ENCODE measurements at regions of chr3 and their contacts with region 1.

Region 1: DNA sequence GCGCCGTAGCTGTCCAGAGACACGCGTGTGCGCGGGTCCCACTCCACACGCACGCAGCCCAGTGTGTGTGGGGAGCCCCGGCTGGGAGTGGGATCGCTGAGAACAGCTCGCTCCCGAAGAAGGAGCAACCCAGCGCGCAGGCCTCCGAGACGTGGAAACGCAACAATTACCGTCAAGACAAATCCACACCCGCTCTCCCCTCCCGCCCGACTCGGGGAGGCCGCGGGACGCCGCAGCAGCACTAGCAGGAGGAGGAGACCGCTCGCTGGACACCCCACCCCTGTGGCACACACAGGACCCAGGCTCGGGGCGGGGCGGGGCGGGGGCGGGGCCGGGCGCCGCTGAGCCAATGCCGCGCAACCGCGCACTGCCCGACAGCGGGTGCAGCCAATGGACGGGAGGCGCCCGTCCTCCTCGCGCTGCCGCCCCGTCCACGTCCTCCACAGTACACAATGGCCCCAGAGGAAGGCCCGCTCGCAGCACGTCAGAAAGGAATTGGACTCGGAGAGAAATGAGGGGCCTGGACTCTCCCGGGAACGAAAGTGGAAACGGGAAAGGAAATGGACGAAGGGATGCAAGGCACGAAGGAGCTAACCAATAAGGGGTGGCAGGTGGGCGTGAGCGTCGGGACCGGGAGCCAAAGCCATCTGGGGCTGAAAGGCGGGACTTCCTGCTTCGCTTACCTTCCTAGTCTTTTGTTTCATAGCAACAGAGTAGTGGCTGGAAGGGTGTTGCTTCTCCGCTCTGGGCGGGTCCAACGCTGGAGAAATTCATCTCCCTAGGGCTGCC is at the start of gene CBLB:
- DNase-seq: peak; percentile 91
- ATAC-seq: peak; percentile 86
- H3K4me3 Mint-ChIP-seq: peak within 1 kb of the TSS; percentile 100
- H3K27ac Mint-ChIP-seq: peak within 1 kb of the TSS; percentile 100
- H3K4me1 Mint-ChIP-seq: peaks cover 36% of the 10 kb centered on the region
- H3K27me3 Mint-ChIP-seq: no peaks in the 10 kb centered on the region
- total RNA-seq, gene CBLB: 112 to 163 TPM

Region 2: DNA sequence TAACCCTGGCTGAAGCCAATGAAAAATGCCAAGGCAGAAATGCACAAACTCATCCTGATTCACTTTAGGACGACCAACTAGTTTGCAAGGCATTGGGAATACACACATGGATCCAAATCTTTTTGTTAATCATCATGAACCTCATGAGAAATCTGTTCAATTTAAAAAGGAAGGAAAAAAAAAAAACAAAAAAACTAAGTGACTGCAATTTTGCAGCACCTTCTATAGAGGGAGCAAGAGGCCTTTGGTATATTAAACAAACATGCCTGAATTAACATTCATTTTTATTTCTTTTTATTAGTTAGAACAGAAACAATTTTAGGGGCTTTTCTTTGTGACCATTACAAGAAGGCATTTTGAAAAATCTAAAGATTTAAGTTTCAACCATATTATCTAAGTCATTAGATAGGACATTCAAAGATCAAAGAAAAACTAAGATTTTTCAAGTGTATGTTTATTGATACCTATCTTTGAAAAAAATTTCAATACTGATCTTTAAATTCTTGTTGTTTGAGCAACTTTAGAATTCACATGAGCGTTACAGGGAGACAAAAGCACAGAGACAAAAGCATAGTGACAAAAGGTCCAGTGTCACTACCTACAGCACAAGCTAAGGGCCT is 182.5 kb before region 1 on chr3:
- CTCF ChIA-PET with region 1: interaction called, 6 read pairs
- POLR2A ChIA-PET with region 1: no interaction called
- intact Hi-C with region 1: loop called (anchors 2 to 5 kb)
- DNase-seq: no peak
- ATAC-seq: no peak
- H3K4me3 Mint-ChIP-seq: no peak overlapping the region
- H3K27ac Mint-ChIP-seq: peak overlapping the region; percentile 42
- H3K4me1 Mint-ChIP-seq: peaks cover 24% of the 10 kb centered on the region
- H3K27me3 Mint-ChIP-seq: no peaks in the 10 kb centered on the region

Region 3: DNA sequence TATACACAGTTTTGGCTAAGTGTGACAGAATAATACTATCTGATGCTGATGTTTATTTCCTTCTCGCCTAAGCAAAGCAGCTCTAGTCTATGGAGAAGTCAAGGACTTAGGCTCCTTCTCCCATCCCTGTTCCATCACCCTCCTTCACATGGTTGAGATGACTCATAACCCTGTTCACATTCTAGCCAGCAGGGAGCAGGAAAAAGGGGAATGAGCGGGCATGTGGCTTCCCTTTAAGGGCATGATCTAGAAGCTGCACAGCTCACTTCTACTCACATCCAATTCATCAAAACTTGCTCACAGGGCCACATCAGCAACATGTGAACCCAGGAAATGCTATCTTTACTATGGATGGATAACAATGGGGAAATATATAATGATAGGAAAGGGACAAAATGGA is 41.0 kb before region 1 on chr3:
- CTCF ChIA-PET with region 1: interaction called, 3 read pairs
- POLR2A ChIA-PET with region 1: interaction called, 9 read pairs
- intact Hi-C with region 1: loop called (anchors 1 kb)
- DNase-seq: peak; percentile 36
- ATAC-seq: no peak
- H3K4me3 Mint-ChIP-seq: peak overlapping the region; percentile 57
- H3K27ac Mint-ChIP-seq: peak overlapping the region; percentile 100
- H3K4me1 Mint-ChIP-seq: peaks cover 88% of the 10 kb centered on the region
- H3K27me3 Mint-ChIP-seq: no peaks in the 10 kb centered on the region

Region 4: GRCh38 chr3:106119614-106120082 is 250.7 kb after region 1 on chr3:
- CTCF ChIA-PET with region 1: no interaction called
- POLR2A ChIA-PET with region 1: no interaction called
- intact Hi-C with region 1: loop called in 1 of 2 experiments (anchors 5 kb)
- DNase-seq: peak; percentile 28
- ATAC-seq: peak; percentile 99
- H3K4me3 Mint-ChIP-seq: no peak overlapping the region
- H3K27ac Mint-ChIP-seq: peak overlapping the region; percentile 83
- H3K4me1 Mint-ChIP-seq: peaks cover 26% of the 10 kb centered on the region
- H3K27me3 Mint-ChIP-seq: no peaks in the 10 kb centered on the region

Region 5: DNA sequence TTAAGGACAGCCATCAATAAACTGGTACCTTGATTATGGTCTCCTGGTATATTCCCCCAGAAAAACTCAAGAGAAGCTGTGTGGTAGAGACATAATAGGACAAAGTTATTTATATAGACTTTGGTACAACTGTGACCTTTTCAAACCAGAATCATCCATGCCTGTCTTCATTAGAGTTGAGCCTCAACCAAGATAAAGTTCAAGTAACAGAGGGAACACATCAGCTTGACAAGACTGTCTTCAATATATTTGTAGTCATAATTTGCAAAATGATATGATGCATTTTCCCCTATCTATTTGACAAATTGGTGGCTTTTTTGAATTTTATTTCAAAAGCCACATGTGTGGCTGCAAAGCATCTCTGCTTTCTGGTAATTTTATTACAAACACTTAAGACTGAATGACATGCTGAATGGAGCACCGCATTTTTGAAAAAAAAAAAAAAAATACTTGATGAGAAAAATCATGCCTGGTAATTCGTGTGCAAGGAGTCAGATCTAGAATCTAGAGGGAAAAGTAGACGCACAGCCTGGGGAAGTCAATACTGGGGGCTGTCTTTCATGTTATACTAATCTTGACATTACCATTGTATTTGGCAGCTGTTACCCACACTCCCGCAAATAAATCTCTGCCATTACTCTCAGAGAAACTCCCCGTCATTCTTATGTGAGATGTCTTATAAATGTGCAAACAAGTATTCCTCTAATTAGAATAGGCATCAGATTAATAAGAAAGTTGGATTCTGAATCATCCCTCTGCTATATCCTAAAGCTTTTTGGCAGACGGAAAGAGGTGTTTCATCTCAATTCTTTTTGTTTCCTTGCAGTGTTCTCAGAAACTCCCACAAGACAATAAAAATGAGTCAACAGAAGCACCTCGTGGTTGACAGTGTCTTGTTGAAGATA is 554.6 kb after region 1 on chr3:
- CTCF ChIA-PET with region 1: no interaction called
- POLR2A ChIA-PET with region 1: interaction called, 3 read pairs
- intact Hi-C with region 1: loop called (anchors 2 to 5 kb)
- DNase-seq: peak; percentile 59
- ATAC-seq: peak; percentile 70
- H3K4me3 Mint-ChIP-seq: peak overlapping the region; percentile 47
- H3K27ac Mint-ChIP-seq: peak overlapping the region; percentile 93
- H3K4me1 Mint-ChIP-seq: peaks cover 60% of the 10 kb centered on the region
- H3K27me3 Mint-ChIP-seq: no peaks in the 10 kb centered on the region